MCF 10A (cell line): ENCODE measurements at regions of chr19 and their contacts with region 1.

Region 1: DNA sequence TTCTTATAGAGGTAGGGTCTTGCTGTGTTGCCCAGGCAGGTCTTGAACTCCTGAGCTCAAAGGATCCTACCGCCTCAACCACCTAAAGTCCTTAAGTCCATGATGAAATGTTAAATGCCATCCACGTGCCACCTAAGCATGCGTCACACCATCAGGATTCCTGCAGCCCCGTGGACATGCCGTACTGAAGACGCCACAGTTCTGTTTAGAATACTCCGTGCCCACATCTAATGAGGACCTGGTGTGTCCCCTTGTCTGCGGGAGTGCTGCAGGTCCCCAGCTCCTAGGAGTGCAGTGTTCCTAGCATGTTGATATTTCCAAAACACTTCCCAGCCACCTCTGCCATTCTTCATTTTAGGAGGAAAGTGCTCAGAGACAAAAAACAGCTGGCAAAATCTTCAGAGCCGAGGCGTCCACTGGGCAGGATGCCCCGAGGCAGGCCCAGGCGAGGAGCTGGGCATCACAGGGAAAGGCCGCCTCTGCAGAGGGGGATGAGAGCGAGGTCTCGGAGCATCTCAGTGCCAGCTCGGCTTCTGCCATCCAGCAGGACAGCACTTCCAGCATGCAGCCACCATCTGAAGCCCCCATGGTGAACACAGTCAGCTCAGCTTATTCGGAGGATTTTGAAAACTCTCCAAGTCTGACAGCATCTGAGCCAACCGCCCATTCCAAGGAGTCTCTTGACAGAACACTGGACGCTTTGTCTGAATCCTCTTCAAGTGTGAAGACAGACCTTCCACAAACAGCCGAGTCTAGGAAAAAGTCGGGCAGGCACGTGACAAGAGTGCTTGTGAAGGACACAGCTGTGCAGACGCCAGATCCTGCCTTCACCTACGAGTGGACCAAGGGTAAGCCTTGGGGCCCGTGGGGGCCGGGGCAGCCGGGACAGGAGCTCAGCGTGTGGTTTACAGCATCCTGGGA is 13.2 kb downstream of the C19orf44 start:
- DNase-seq: no peak
- H3K4me3 Mint-ChIP-seq: no peak overlapping the region
- H3K27ac Mint-ChIP-seq: no peak overlapping the region
- H3K4me1 Mint-ChIP-seq: no peaks in the 10 kb centered on the region
- H3K27me3 Mint-ChIP-seq: no peaks in the 10 kb centered on the region
- CTCF ChIP-seq: no peak

Region 2: GRCh38 chr19:16441661-16442162 is 67.7 kb before region 1 on chr19:
- CTCF ChIA-PET with region 1: interaction called, 3 read pairs
- POLR2A ChIA-PET with region 1: no interaction called
- intact Hi-C with region 1: loop called (anchors 5 kb)
- DNase-seq: peak; percentile 33
- H3K4me3 Mint-ChIP-seq: no peak overlapping the region
- H3K27ac Mint-ChIP-seq: no peak overlapping the region
- H3K4me1 Mint-ChIP-seq: peaks cover 6% of the 10 kb centered on the region
- H3K27me3 Mint-ChIP-seq: no peaks in the 10 kb centered on the region
- CTCF ChIP-seq: peak; percentile 46

Region 3: GRCh38 chr19:16548956-16549355 is 39.6 kb after region 1 on chr19:
- CTCF ChIA-PET with region 1: no interaction called
- POLR2A ChIA-PET with region 1: no interaction called
- intact Hi-C with region 1: no loop called
- DNase-seq: no peak
- H3K4me3 Mint-ChIP-seq: no peak overlapping the region
- H3K27ac Mint-ChIP-seq: peak overlapping the region; percentile 35
- H3K4me1 Mint-ChIP-seq: peaks cover 10% of the 10 kb centered on the region
- H3K27me3 Mint-ChIP-seq: no peaks in the 10 kb centered on the region
- CTCF ChIP-seq: no peak

Region 4: GRCh38 chr19:16561382-16561781 is 52.0 kb after region 1 on chr19:
- CTCF ChIA-PET with region 1: no interaction called
- POLR2A ChIA-PET with region 1: no interaction called
- intact Hi-C with region 1: no loop called
- DNase-seq: no peak
- H3K4me3 Mint-ChIP-seq: no peak overlapping the region
- H3K27ac Mint-ChIP-seq: no peak overlapping the region
- H3K4me1 Mint-ChIP-seq: no peaks in the 10 kb centered on the region
- H3K27me3 Mint-ChIP-seq: no peaks in the 10 kb centered on the region
- CTCF ChIP-seq: no peak